Activated CD4-positive, alpha-beta memory T cell treated with anti-CD3 and anti-CD28 coated beads for 36 hours (primary cell): ENCODE measurements at regions of chr12 and their contacts with region 1.

Region 1: GRCh38 chr12:51341259-51342007 is 5.0 kb downstream of the CELA1 start:
- DNase-seq: peak; percentile 78
- H3K4me3 Mint-ChIP-seq: no peak overlapping the region
- H3K27ac Mint-ChIP-seq: no peak overlapping the region
- H3K4me1 Mint-ChIP-seq: peaks cover 19% of the 10 kb centered on the region
- H3K27me3 Mint-ChIP-seq: no peaks in the 10 kb centered on the region

Region 2: DNA sequence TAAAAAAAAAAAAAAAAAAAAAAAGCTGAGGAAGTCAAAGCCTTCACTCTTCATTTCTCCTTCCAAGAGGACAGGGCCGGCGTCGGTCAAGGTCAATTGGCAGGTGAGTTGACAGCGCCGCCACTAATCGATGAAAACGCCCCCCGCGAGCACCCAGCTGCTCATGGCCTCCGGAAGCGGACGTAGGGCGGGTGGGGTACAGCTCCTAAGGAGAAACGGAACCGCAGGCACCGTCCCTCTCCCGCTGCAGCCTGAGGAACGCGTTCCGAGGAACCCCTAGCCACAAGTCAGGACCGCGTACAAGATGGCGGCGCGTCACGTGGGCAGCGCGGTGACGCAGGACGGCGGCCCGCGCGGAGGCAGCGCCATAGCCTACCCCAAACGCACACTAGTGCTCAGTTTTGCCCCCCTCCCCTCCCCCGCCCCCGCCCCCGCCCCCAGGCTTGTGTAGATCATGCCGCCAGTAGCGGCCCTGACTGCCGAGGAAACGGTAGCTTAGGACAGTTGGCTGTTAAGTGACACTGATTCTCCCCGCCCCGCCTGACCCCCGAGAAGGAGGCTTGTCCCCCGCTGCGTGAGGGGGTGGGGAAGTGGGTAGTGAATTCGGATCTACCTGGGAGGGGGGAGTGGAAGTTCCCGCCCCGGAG is 577.7 kb before region 1 on chr12 and contains the start of gene ATF1:
- CTCF ChIA-PET with region 1: interaction called, 13 read pairs
- POLR2A ChIA-PET with region 1: interaction called, 3 read pairs
- intact Hi-C with region 1: loop called (anchors 10 kb)
- DNase-seq: peak; percentile 94
- H3K4me3 Mint-ChIP-seq: peak within 1 kb of the TSS; percentile 82
- H3K27ac Mint-ChIP-seq: peak within 1 kb of the TSS; percentile 87
- H3K4me1 Mint-ChIP-seq: peaks cover 34% of the 10 kb centered on the region
- H3K27me3 Mint-ChIP-seq: no peaks in the 10 kb centered on the region
- total RNA-seq, gene ATF1: 50.1 to 50.5 TPM

Region 3: DNA sequence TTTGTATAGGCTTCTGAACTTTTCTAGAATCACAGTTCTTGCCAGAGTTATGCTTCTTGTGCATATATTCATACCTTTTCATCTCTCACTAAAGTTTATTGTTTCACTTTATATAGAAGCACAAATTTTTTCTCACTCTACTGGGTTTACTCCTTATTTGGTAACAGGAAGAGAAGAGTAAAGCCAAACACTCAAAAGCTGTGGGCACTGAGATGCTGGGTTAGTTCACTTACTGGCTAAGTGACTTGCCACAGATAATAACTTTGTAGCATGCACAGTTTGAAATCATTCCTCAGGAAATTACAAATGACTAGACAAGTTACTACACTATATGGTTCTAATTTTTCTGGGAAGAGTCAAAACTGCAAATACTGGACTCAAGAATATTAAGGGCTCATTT is 381.3 kb before region 1 on chr12:
- CTCF ChIA-PET with region 1: no interaction called
- POLR2A ChIA-PET with region 1: no interaction called
- intact Hi-C with region 1: no loop called
- DNase-seq: no peak
- H3K4me3 Mint-ChIP-seq: no peak overlapping the region
- H3K27ac Mint-ChIP-seq: no peak overlapping the region
- H3K4me1 Mint-ChIP-seq: peaks cover 3% of the 10 kb centered on the region
- H3K27me3 Mint-ChIP-seq: no peaks in the 10 kb centered on the region

Region 4: GRCh38 chr12:51083126-51083833 is 258.2 kb before region 1 on chr12 and contains the start of gene CSRNP2:
- CTCF ChIA-PET with region 1: interaction called, 4 read pairs
- POLR2A ChIA-PET with region 1: no interaction called
- intact Hi-C with region 1: loop called (anchors 1 kb)
- DNase-seq: peak; percentile 97
- H3K4me3 Mint-ChIP-seq: peak within 1 kb of the TSS; percentile 91
- H3K27ac Mint-ChIP-seq: peak within 1 kb of the TSS; percentile 83
- H3K4me1 Mint-ChIP-seq: peaks cover 46% of the 10 kb centered on the region
- H3K27me3 Mint-ChIP-seq: no peaks in the 10 kb centered on the region
- total RNA-seq, gene CSRNP2: 19.2 to 20.2 TPM

Region 5: DNA sequence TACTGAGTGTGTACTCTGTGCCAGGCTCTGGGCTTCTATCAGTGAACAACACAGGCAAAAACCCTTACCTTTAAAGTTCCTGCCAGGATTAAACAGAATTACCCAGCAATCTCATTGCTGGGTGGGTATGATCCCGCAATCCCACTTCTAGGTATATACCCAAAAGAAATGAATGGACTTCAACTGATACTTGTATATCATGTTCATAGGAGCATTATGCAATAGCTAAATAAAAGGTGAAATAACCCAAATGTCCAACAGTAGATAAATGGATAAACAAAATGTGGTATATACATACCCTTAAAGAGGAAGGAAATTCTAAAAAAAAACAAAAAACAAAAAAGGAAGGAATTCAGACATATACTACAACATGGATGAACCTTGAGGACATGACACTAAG is 88.2 kb before region 1 on chr12:
- CTCF ChIA-PET with region 1: interaction called, 20 read pairs
- POLR2A ChIA-PET with region 1: no interaction called
- intact Hi-C with region 1: no loop called
- DNase-seq: no peak
- H3K4me3 Mint-ChIP-seq: no peak overlapping the region
- H3K27ac Mint-ChIP-seq: no peak overlapping the region
- H3K4me1 Mint-ChIP-seq: peaks cover 2% of the 10 kb centered on the region
- H3K27me3 Mint-ChIP-seq: no peaks in the 10 kb centered on the region

Region 6: GRCh38 chr12:51293696-51294095 is 47.7 kb before region 1 on chr12:
- CTCF ChIA-PET with region 1: interaction called, 18 read pairs
- POLR2A ChIA-PET with region 1: no interaction called
- intact Hi-C with region 1: no loop called
- DNase-seq: no peak
- H3K4me3 Mint-ChIP-seq: no peak overlapping the region
- H3K27ac Mint-ChIP-seq: peak overlapping the region; percentile 56
- H3K4me1 Mint-ChIP-seq: peaks cover 7% of the 10 kb centered on the region
- H3K27me3 Mint-ChIP-seq: no peaks in the 10 kb centered on the region

Region 7: DNA sequence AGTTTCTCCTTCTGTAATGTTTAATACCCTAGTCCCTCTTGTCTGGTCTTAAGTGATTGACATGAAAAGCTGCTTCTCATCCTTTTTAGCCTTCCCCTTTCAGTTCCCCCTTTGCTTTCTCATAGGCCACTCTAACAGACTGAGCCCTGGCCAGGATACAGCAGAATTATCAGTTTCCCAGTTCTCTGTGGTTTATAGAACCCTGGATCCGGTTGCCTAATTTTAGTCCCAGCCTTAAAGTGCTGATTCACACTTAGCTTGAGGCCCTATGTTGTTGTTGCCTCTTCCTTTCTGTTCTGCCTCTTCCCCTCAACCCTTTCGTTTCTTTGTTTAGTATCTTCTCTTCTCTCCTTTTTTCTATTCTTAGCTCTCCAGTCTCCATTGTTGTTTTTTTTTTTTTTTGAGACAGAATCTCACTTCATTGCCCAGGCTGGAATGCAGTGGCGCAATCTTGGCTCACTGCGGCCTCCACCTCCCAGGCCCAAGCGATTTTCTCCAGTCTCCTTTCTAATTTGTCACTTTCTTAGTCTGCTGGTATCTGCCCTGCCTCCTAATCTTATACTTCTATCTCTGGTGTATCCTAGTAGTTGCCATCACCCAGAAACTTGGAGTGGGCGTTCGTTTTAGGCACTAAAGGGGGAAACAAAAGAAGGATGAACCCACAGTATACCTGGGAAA is 14.5 kb before region 1 on chr12:
- CTCF ChIA-PET with region 1: interaction called, 38 read pairs
- POLR2A ChIA-PET with region 1: interaction called, 4 read pairs
- intact Hi-C with region 1: loop called (anchors 2 kb)
- DNase-seq: no peak
- H3K4me3 Mint-ChIP-seq: peak overlapping the region; percentile 52
- H3K27ac Mint-ChIP-seq: peak overlapping the region; percentile 90
- H3K4me1 Mint-ChIP-seq: peaks cover 64% of the 10 kb centered on the region
- H3K27me3 Mint-ChIP-seq: no peaks in the 10 kb centered on the region